Activated CD4-positive, alpha-beta memory T cell treated with anti-CD3 and anti-CD28 coated beads for 36 hours (primary cell): ENCODE measurements at regions of chr7 and their contacts with region 1.

Region 1: DNA sequence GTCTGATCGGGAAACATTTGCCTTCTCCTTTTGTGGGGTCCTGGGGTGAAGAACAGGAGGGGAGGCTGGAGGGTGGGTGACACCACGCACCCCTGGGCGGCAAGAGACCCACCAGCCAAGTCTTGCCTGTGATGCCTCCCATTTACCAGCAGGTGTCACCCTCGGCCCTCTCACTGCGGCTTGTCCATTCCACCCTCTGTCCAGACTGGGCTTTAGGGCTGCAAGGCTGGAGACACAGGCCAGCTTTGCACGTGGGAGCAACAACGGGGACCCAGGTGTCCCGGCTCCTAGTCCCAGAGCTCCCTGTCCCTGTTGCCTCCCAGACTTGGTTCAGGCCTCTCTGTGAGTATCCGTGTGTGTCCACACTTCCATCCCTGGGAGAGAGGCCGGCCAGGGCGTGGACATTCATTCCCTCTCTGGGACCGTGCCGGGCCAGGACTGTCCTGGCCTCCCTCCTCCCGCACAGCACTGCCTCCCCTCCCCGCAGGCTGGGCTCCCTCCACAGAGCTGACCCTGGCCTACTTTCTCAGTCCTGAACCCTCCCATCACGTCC is 36.2 kb upstream of the GTF2IRD1 start:
- DNase-seq: peak; percentile 64
- H3K4me3 Mint-ChIP-seq: no peak overlapping the region
- H3K27ac Mint-ChIP-seq: no peak overlapping the region
- H3K4me1 Mint-ChIP-seq: no peaks in the 10 kb centered on the region
- H3K27me3 Mint-ChIP-seq: no peaks in the 10 kb centered on the region

Region 2: GRCh38 chr7:74443543-74444247 is 26.2 kb after region 1 on chr7:
- CTCF ChIA-PET with region 1: no interaction called
- POLR2A ChIA-PET with region 1: no interaction called
- intact Hi-C with region 1: no loop called
- DNase-seq: no peak
- H3K4me3 Mint-ChIP-seq: no peak overlapping the region
- H3K27ac Mint-ChIP-seq: no peak overlapping the region
- H3K4me1 Mint-ChIP-seq: no peaks in the 10 kb centered on the region
- H3K27me3 Mint-ChIP-seq: no peaks in the 10 kb centered on the region

Region 3: DNA sequence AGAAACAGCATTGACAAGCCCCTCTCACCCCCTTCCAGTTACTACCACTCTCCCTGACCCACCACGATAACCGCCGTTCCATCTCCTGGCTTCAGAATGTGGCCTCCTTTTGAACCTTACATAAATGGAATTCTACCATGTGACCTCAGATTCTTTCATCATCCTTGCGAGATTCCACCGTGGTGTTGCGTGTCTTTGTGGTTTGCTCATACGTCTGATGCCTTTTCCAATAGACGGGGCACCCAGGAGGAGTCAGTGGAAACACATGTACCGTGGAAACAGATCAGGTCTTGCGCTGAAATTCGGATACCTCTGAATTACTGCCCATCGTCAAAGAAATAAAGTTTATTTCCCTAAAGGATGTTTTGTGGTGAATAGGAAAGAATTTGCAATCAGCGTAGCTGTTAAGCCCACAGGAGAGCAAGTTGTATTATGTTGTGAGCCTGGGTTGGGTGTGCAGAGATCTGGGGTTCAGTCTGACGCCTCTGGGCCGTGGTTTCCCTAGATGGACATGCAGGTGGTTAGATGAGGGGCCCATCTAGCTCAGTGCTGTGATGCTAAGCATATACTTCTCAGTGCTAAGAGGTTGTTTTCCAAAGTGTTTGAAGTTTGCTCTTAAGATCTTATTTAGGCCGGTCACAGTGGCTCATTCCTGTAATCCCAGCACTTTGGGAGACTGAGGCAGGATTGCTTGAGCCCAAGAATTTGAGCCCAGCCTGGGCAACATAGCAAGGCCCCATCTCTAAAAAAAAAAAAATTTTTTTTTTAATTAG is 65.3 kb after region 1 on chr7:
- CTCF ChIA-PET with region 1: no interaction called
- POLR2A ChIA-PET with region 1: no interaction called
- intact Hi-C with region 1: no loop called
- DNase-seq: no peak
- H3K4me3 Mint-ChIP-seq: no peak overlapping the region
- H3K27ac Mint-ChIP-seq: no peak overlapping the region
- H3K4me1 Mint-ChIP-seq: no peaks in the 10 kb centered on the region
- H3K27me3 Mint-ChIP-seq: peaks cover 3% of the 10 kb centered on the region

Region 4: GRCh38 chr7:74544706-74545469 is 127.4 kb after region 1 on chr7:
- CTCF ChIA-PET with region 1: interaction called, 12 read pairs
- POLR2A ChIA-PET with region 1: no interaction called
- intact Hi-C with region 1: loop called (anchors 5 kb)
- DNase-seq: peak; percentile 58
- H3K4me3 Mint-ChIP-seq: no peak overlapping the region
- H3K27ac Mint-ChIP-seq: no peak overlapping the region
- H3K4me1 Mint-ChIP-seq: no peaks in the 10 kb centered on the region
- H3K27me3 Mint-ChIP-seq: no peaks in the 10 kb centered on the region

Region 5: DNA sequence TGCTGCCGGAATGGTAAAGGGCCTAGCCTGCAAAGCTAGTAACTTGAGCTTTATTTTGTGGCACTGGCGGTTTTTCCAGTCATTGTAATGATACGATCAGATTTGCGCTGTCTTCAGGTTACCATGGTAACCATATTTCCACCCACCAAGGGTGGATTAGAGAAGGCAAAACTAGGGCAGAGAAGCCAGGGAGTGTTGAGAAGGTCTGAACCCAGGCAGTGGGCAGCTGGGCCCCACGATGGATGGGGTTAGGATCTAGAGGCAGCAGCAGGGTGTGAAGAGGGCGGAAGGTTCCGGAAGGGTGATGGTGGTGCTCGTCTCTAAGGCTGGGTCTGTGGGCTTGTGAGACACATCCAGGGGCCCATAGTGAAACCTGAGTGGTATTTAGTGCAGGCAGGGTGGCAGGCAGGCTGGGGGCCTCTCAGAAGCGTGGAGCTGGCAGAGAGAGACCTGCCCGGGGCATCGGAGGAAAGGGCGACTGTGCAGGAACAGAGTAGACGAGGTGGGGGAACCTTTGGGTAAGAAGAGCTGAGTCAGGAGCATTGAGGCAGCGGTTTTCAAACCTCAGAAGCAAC is 152.1 kb after region 1 on chr7:
- CTCF ChIA-PET with region 1: interaction called, 112 read pairs
- POLR2A ChIA-PET with region 1: no interaction called
- intact Hi-C with region 1: loop called (anchors 1 kb)
- DNase-seq: peak; percentile 58
- H3K4me3 Mint-ChIP-seq: peak overlapping the region; percentile 17
- H3K27ac Mint-ChIP-seq: peak overlapping the region; percentile 80
- H3K4me1 Mint-ChIP-seq: peaks cover 11% of the 10 kb centered on the region
- H3K27me3 Mint-ChIP-seq: no peaks in the 10 kb centered on the region